Activated CD4-positive, alpha-beta T cell treated with anti-CD3 and anti-CD28 coated beads for 36 hours (primary cell): ENCODE measurements at regions of chr11 and their contacts with region 1.

Region 1: DNA sequence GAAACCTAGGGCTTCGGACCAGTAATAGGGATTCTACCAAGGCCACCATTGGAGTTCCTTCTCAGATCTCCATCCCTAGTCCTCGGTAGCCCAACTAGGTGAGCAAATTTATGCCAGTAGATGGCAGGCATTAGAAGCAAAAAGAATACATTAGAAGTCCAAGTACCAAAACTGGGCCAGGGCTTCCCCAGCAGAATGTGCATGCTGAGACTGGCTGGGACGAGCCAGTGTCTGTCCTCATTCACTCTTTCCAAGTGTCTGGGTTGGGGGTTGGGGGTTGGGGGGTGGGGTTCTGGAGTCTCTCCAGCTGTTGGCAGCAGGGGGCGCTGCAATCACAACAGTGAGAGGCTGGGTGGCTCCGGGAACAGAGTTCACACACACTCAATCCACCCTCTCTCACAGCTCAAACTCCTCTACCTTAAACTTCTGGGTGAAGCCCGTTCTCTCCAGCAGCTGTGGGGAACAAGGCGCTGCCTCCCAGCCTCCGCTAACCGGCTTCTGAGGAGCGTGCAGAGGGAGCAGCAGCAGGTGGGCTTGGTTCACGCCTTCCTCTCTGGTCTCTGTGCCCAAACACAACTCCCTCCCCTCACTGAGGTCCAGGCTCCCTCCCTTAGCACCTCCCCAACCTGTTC is 57.5 kb downstream of the BTG4 start:
- DNase-seq: peak; percentile 88
- ATAC-seq: peak; percentile 93
- H3K4me3 Mint-ChIP-seq: no peak overlapping the region
- H3K27ac Mint-ChIP-seq: no peak overlapping the region
- H3K4me1 Mint-ChIP-seq: no peaks in the 10 kb centered on the region
- H3K27me3 Mint-ChIP-seq: peaks cover 4% of the 10 kb centered on the region

Region 2: GRCh38 chr11:111531687-111532364 is 77.1 kb after region 1 on chr11:
- CTCF ChIA-PET with region 1: no interaction called
- POLR2A ChIA-PET with region 1: no interaction called
- intact Hi-C with region 1: loop called in 1 of 2 experiments (anchors 1 kb)
- DNase-seq: peak; percentile 88
- ATAC-seq: peak; percentile 96
- H3K4me3 Mint-ChIP-seq: no peak overlapping the region
- H3K27ac Mint-ChIP-seq: peak overlapping the region; percentile 59
- H3K4me1 Mint-ChIP-seq: peaks cover 43% of the 10 kb centered on the region
- H3K27me3 Mint-ChIP-seq: peaks cover 9% of the 10 kb centered on the region

Region 3: DNA sequence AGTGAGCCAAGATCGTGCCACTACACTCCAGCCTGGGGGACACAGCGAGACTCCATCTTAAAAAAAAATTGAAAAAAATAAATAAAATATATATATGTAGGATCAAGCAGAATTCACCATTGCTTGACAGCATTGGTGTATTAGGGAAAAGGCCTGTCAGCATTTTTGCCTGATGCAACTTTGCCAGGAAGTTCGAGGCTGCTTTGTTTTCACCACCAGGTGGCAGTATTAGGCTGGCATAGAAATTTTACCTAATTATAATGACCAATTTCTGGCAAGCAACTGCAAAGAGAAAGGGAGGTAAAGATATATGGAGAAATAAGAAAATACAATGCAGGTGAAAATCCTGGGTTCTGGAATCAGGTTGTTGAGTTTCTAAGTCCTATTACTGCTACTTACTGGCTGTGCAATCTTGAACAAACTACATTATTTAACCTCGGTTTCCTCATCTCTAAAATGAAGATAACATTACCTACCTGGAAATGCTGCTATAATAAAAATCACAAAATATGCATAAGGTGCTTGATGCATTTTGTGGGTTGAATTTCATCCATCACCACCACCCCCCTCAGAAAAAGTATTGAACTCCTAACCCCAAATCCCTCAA is 110.5 kb after region 1 on chr11:
- CTCF ChIA-PET with region 1: interaction called, 5 read pairs
- POLR2A ChIA-PET with region 1: no interaction called
- intact Hi-C with region 1: loop called (anchors 1 to 5 kb)
- DNase-seq: peak; percentile 76
- ATAC-seq: peak; percentile 44
- H3K4me3 Mint-ChIP-seq: no peak overlapping the region
- H3K27ac Mint-ChIP-seq: no peak overlapping the region
- H3K4me1 Mint-ChIP-seq: no peaks in the 10 kb centered on the region
- H3K27me3 Mint-ChIP-seq: no peaks in the 10 kb centered on the region